IMR-90 (cell line): ENCODE measurements at regions of chrX and their contacts with region 1.

Region 1: DNA sequence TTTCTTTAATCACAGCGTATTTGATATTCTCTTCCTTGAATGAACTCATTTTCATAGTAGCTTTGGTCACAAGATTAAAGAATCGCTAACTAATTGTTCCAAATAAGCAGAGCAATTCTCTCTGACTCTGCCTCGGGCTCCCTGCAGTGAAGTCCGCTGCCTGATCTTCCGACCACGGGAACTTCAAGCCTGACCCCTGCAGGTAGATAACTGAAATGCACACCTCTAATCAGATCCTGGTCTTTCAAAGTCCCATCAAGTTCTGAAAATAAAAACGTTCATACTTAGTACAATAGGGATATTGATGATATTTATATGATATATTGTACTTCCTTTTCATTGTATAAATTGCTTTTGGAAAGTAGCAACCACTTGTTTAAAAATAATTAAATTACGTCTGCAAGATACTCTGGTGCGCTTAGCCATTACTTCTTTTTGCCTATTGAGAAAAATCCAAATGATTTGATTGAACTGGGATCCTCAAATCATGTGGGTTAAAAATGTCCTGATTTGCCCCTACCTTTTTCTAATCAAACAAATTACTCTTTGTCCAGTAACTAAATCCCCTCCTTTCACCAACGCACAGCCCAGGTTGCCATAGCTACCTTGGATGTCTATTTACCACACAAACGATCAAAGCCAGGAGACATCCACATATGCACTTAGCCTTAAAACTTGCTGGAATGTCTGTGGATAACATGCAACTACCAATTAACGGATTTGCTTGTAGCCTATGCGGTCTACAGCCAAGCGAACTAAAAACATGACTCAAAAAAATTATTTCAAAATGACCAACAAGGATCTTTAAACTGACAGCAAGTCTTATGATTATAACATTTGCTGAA is 4.2 kb downstream of the MID1 start:
- DNase-seq: peak; percentile 58
- ATAC-seq: no peak
- H3K4me3 ChIP-seq: no peak overlapping the region
- H3K27ac ChIP-seq: peak overlapping the region; percentile 22; the same call in 1 of the 2 replicates
- H3K4me1 ChIP-seq: peaks cover 7% of the 10 kb centered on the region
- H3K27me3 ChIP-seq: no peaks in the 10 kb centered on the region
- CTCF ChIP-seq: peak; percentile 58
- POLR2A ChIP-seq: no peak
- RAD21 ChIP-seq: peak; percentile 64

Region 2: GRCh38 chrX:10326578-10326977 is 289.6 kb before region 1 on chrX:
- CTCF ChIA-PET with region 1: no interaction called
- POLR2A ChIA-PET with region 1: no interaction called
- dilution Hi-C with region 1: no loop called
- in situ Hi-C with region 1: no loop called
- intact Hi-C with region 1: loop called (anchors 5 kb)
- DNase-seq: peak; percentile 43
- ATAC-seq: peak; percentile 60
- H3K4me3 ChIP-seq: no peak overlapping the region
- H3K27ac ChIP-seq: no peak overlapping the region
- H3K4me1 ChIP-seq: peaks cover 2% of the 10 kb centered on the region; the same call in 1 of the 2 replicates
- H3K27me3 ChIP-seq: no peaks in the 10 kb centered on the region; the same call in 1 of the 2 replicates
- CTCF ChIP-seq: peak; percentile 46
- POLR2A ChIP-seq: no peak
- RAD21 ChIP-seq: peak; percentile 50

Region 3: GRCh38 chrX:10469900-10470408 is 146.2 kb before region 1 on chrX:
- CTCF ChIA-PET with region 1: no interaction called
- POLR2A ChIA-PET with region 1: no interaction called
- dilution Hi-C with region 1: no loop called
- in situ Hi-C with region 1: no loop called
- intact Hi-C with region 1: loop called (anchors 5 kb)
- DNase-seq: peak; percentile 10
- ATAC-seq: no peak
- H3K4me3 ChIP-seq: no peak overlapping the region
- H3K27ac ChIP-seq: peak overlapping the region; percentile 38; the same call in 1 of the 2 replicates
- H3K4me1 ChIP-seq: peaks cover 8% of the 10 kb centered on the region
- H3K27me3 ChIP-seq: no peaks in the 10 kb centered on the region
- CTCF ChIP-seq: no peak
- POLR2A ChIP-seq: no peak
- RAD21 ChIP-seq: no peak

Region 4: GRCh38 chrX:10529344-10529743 is 86.8 kb before region 1 on chrX:
- CTCF ChIA-PET with region 1: no interaction called
- POLR2A ChIA-PET with region 1: no interaction called
- dilution Hi-C with region 1: no loop called
- in situ Hi-C with region 1: no loop called
- intact Hi-C with region 1: no loop called
- DNase-seq: peak; percentile 60
- ATAC-seq: peak; percentile 62; the same call in 1 of the 2 replicates
- H3K4me3 ChIP-seq: no peak overlapping the region
- H3K27ac ChIP-seq: no peak overlapping the region
- H3K4me1 ChIP-seq: peaks cover 7% of the 10 kb centered on the region
- H3K27me3 ChIP-seq: no peaks in the 10 kb centered on the region
- CTCF ChIP-seq: no peak
- POLR2A ChIP-seq: no peak
- RAD21 ChIP-seq: no peak

Region 5: DNA sequence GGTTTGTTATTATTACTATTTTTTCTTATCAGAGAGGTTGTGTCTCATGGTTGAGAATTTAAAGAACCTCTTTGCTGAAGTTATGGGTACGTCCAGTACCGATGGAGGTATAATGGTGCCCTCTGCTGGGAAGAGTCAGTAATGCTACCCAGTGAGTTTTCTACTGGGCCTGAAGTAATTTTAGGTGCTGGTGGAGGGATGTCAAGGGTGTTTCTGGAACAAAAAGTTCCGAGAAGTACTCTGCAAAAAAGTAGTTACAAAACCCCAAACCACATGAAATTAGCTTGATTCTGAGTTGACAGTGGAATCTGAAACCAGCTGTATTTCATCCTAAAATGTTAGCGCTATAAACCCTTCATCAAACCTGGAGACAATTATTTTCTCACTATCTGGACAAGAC is 106.7 kb after region 1 on chrX:
- CTCF ChIA-PET with region 1: interaction called, 5 read pairs
- POLR2A ChIA-PET with region 1: no interaction called
- dilution Hi-C with region 1: no loop called
- in situ Hi-C with region 1: no loop called
- intact Hi-C with region 1: loop called (anchors 5 kb)
- DNase-seq: peak; percentile 67
- ATAC-seq: peak; percentile 90
- H3K4me3 ChIP-seq: no peak overlapping the region
- H3K27ac ChIP-seq: no peak overlapping the region
- H3K4me1 ChIP-seq: 0 out of 2 replicates have a peak, but pooled peaks cover 1% of the 10 kb centered on the region
- H3K27me3 ChIP-seq: no peaks in the 10 kb centered on the region
- CTCF ChIP-seq: peak; percentile 78
- POLR2A ChIP-seq: no peak
- RAD21 ChIP-seq: peak; percentile 76